G401 (cell line): ENCODE measurements at regions of chr5 and their contacts with region 1.

Region 1: DNA sequence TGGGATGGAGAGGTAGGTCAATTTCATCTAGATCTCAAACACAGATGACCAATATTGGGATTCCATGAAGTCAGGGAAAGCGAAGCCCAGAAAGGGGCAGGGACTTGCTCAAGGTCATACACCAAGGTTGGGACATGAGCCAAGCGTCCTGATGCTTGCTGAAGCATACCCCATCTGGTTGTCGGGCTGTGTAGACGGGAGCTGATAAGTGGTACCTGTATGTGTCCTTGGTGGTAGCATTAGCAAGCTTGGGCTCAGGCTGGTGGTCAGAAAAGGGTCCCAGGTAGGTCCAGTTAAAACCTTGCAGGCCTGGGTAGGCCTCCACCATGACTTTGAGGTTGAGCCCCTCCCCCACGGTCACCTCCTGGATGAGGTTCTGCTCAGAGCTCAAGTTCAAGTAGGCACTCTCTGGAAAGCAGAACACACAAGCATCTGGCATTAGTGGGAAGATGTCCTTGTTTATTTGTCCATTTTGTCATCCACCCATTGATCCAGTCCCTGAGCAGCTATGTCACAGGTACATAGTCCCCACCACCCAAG is 13.2 kb downstream of the CSF1R start:
- DNase-seq: no peak

Region 2: DNA sequence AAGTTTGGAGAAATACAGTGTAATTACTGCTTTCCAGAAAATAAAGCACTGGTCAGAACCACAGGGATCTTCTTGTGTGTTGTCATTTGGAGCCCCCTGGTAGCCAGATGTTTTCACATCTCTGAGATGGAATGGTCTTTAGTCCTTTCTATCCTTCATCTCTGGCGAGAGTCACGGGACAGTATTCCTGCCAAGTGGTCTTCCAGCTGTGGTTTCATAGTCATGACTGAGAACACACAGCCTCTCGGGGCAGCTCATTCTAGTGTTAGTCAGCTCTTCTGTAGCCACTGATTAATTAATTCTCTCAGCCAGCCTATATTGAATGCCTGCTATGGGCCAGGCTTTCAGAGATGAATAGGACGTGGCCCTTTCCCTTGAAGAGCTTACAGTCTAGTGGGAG is 38.5 kb before region 1 on chr5:
- in situ Hi-C with region 1: loop called (anchors 5 kb)
- DNase-seq: no peak

Region 3: DNA sequence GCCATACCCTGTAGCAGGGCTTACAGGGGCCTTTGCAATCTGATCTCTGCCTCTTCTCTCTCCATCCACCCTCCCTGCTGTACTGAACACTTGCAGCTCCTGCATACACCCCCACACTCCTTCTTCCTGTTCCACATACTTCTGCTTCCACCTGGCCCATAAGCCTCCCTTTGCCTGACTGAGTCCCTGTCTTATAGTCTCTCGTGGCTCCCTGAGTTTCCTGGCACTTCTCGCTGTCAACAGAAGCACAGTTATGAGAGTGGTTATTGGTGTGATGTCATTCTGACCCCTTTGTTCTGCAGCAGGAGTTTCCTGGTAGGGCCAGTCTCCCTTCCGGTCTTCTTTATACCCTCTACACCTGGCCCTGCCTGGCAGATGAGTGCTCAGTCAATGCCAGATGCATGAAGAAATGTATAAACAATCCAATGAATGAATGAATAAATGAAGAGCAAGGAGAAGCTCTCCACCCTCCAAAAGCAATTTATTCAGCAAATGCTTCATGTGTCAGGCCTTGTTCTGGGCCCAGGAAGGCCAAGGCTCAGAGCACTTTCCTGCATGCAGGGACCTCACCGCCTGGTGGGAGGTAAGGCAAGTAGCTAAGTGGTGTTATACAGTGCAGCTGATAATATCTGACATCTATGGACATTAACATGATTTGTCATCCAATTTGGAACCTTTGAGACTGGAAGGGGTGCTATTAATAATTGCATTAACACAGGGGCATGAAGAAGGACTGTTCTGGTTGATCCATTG is 33.7 kb after region 1 on chr5:
- in situ Hi-C with region 1: no loop called
- DNase-seq: no peak

Region 4: DNA sequence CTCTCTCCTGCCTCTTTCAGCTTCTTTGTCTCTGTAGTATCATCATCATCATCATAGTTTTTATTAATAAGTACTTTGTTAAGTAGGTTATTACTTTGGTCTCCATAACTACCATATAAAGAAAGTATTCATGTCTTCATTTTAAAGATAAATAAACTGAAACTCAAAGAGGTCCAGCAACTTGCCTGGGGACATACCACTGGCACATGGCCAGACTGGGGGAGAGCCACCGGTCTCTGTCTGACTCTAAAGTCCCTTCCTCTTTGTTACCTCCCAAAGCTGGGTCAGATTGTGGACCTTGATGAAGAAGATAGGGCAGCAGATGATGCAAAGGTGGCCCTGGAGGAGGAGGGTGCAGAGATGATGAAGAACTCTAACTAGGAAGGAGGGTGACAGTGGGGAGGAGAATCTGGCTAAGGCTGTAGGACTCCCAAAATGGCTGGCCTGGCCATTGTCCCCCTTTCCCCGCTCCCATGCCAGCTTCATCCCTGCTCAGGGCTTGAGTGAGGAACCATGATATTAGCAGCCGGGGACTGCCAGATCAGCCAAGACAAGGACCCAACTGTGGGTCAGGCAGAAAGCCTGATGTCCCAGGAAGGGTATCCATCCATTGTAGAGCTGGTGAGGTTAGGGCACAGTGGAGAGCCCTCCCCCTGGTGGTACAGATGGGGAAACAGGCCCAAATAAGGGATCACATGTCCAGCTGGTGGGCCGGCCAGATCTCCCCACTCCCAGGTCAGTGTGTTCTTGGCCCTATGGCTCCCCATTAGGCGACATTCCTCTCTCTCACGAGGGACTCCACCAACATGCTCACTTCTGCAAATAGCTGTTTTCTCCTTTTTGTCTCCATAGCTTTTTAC is 102.2 kb after region 1 on chr5:
- in situ Hi-C with region 1: no loop called
- DNase-seq: no peak